Activated T-helper 2 cell treated with anti-CD3 and anti-CD28 coated beads, Interferon-gamma antibody, Interleukin-2, Interleukin-4, amounts not matched to agents 10 μg/mL and 5 μg/mL and 100 μg/mL, durations not matched to agents 14 hours and 24 hours and 36 hours (primary cell): ENCODE measurements at regions of chr20 and their contacts with region 1.

Region 1: DNA sequence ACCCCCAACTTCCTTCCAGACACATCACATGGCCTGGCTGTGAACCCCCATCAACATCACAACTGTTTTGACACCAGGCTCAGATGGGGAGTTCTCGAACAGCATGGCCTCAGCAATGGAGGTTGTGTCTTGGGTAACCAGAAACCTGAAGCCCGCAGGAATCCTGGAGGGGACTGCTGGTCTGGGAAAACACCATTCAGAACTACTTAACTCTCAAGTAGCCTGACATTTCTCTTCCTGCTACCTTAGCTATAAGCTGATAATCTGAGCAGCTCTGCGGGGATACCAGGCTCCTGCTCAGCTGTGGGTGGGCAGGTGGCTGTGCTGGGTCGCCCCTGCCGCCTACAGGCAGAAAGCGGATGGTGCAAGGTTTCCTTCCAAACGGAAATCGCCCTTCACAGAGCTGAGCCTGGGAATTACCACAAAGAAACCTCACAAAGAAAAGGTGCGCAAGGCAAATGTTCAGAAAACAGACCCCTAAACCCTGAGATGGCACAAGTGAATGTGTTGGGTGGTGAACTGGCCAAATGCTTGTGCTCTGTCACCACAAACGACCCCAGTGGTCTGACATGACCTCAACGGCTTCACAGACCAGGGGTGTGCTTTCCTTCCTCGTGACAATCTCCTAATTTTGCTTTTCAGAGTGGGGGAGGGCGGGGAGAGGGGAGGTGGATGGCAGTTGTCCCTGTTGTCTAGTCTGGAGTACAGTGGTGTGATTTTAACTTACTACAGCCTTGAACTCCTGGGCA is 29.5 kb downstream of the SNX5 start:
- DNase-seq: peak; percentile 41
- H3K4me3 Mint-ChIP-seq: no peak overlapping the region
- H3K27ac Mint-ChIP-seq: peak overlapping the region; percentile 52
- H3K4me1 Mint-ChIP-seq: peaks cover 22% of the 10 kb centered on the region
- H3K27me3 Mint-ChIP-seq: no peaks in the 10 kb centered on the region

Region 2: GRCh38 chr20:17747431-17747867 is 191.6 kb before region 1 on chr20:
- intact Hi-C with region 1: no loop called
- DNase-seq: no peak
- H3K4me3 Mint-ChIP-seq: no peak overlapping the region
- H3K27ac Mint-ChIP-seq: no peak overlapping the region
- H3K4me1 Mint-ChIP-seq: peaks cover 4% of the 10 kb centered on the region
- H3K27me3 Mint-ChIP-seq: peaks cover 7% of the 10 kb centered on the region

Region 3: GRCh38 chr20:17859616-17860232 is 79.3 kb before region 1 on chr20:
- intact Hi-C with region 1: no loop called
- DNase-seq: no peak
- H3K4me3 Mint-ChIP-seq: no peak overlapping the region
- H3K27ac Mint-ChIP-seq: no peak overlapping the region
- H3K4me1 Mint-ChIP-seq: peaks cover 34% of the 10 kb centered on the region
- H3K27me3 Mint-ChIP-seq: peaks cover 20% of the 10 kb centered on the region

Region 4: DNA sequence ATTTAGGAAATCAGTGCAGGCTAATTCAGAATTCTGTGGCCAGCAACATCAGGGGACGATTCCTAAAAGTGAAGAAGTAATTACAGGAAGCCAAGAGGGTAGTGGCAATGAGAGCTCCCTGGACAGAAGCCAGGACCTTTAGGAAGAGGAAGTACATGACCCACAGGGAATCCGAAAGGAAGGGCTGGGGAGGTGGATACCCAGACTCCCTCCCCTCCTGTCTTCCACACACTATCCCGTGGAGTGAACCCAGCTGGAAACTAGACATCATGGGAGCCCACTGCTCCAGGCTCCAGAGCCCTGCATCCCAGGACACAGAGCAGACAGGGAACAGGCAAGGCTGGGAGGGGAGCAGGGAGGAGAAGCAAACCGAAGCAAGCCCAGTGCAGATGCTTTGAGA is 53.5 kb before region 1 on chr20:
- intact Hi-C with region 1: no loop called
- DNase-seq: no peak
- H3K4me3 Mint-ChIP-seq: no peak overlapping the region
- H3K27ac Mint-ChIP-seq: no peak overlapping the region
- H3K4me1 Mint-ChIP-seq: no peaks in the 10 kb centered on the region
- H3K27me3 Mint-ChIP-seq: peaks cover 7% of the 10 kb centered on the region

Region 5: GRCh38 chr20:17904027-17904426 is 35.0 kb before region 1 on chr20:
- intact Hi-C with region 1: loop called (anchors 5 kb)
- DNase-seq: no peak
- H3K4me3 Mint-ChIP-seq: no peak overlapping the region
- H3K27ac Mint-ChIP-seq: no peak overlapping the region
- H3K4me1 Mint-ChIP-seq: peaks cover 6% of the 10 kb centered on the region
- H3K27me3 Mint-ChIP-seq: peaks cover 10% of the 10 kb centered on the region

Region 6: DNA sequence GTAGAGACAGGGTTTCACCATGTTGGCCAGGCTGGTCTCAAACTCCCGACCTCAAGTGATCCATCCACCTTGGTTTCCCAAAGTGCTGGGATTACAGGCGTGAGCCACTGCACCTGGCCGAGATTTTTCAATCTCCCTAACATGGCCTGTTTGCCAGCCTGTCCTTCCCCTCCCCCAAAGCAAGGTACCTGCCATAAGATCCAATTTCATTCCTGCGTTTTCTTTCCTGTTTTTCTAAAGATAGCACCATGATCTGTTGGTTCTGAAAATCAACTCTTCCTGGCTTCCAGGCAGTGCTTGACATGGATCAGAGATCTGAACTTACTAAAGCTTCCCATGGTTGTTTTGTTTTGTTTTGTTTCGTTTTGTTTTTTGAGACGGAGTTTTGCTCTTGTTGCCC is 37.3 kb after region 1 on chr20:
- intact Hi-C with region 1: no loop called
- DNase-seq: no peak
- H3K4me3 Mint-ChIP-seq: no peak overlapping the region
- H3K27ac Mint-ChIP-seq: no peak overlapping the region
- H3K4me1 Mint-ChIP-seq: peaks cover 31% of the 10 kb centered on the region
- H3K27me3 Mint-ChIP-seq: no peaks in the 10 kb centered on the region